ENCODE measurements at regions of chr4 and their contacts with region 1.

Region 1: DNA sequence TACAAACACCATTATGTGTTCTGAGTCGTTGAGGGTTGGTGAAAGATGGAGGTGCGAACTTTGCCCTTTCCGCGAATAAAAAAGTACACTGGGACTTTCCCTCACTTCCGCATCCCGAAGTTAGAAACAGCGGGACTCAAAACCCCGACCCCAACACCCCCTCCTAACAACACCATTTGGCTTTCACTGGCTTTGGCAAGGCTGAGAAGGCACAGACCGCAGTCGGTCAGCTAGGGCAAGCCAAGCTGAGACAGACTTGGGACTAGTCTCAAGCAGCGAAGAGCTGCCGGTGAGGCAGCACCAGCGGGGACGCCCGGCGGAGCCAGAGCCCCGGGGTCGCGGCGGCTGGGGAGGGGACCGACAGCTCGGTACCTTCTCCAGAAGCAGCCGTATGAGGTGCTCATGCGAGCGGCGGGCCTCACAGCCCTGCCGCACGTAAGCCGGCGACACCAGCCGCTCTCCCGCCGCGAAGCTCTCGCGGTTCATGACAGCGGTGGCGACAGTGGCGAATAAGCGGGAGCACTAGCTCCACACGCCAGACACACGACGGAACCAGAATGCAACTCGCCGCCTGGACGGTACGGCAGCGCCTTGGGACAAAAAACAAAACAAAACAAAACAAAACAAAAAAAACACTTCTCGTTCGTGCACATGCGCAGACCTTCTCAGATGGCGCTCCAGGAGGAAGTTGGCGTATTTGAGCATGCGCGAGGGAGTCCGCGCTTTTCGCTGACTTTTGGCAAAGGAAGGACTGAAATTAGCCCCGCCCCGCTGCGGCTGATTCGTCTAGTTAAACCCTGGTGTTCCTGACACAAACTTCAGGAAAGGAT is at the start of gene SEPSECS:
- DNase-seq: peak; percentile 90 to 98
- H3K4me3 ChIP-seq: peak within 1 kb of the TSS; percentile 76 to 86
- H3K27ac ChIP-seq: peak within 1 kb of the TSS; percentile 95 to 97
- H3K4me1 ChIP-seq: peaks cover 3 to 15% of the 10 kb centered on the region in 2 donors
- H3K27me3 ChIP-seq: no peaks in the 10 kb centered on the region
- CTCF ChIP-seq: no peak
- total RNA-seq, gene SEPSECS: 5.2 TPM

Region 2: GRCh38 chr4:24190936-24191695 is 969.0 kb before region 1 on chr4:
- intact Hi-C with region 1: no loop called
- DNase-seq: no peak
- H3K4me3 ChIP-seq: no peak overlapping the region
- H3K27ac ChIP-seq: no peak overlapping the region
- H3K4me1 ChIP-seq: no peaks in the 10 kb centered on the region
- H3K27me3 ChIP-seq: no peaks in the 10 kb centered on the region
- CTCF ChIP-seq: no peak

Region 3: DNA sequence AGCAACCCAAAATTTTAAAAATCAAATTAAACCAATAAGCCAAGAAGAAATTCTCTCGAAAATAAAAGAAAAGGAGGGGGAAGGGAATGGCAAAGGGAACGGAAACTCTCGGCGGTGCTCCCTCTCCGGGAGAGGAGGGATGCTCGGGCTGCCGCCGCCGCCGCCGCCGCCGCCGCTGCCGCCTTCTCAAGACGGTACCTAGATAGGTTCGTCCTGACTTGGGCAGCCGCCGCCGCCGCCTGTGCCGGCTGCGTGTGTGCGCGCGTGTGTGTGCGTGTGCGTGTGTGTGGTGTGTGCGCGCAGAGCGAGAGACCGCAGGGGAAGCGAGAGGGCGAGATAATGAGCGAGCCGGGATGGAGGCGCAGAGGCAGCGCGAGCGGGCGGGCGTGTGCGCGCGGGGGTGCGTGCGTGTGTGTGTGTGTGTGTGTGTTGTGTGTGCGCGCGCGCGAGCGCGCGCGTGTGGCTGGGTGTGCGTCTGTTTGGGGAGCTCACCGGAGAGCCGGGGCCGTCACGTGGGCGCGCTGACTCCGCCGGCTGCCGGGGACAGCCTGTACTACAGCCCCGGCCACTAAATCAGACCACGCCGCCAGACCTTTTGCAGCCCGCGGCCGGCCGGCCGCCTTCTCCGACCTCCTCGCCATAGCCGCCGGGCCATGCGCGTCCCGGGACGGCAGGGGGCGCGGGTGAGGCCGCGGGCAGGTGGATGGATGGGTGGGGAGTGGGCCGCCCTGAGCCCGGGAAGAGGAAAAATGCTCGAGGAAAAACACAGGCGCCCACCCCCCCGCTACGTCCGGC is 687.4 kb before region 1 on chr4:
- intact Hi-C with region 1: loop called (anchors 5 kb)
- DNase-seq: peak; percentile 31 to 88
- H3K4me3 ChIP-seq: peak overlapping the region; percentile 60 to 81
- H3K27ac ChIP-seq: peak overlapping the region; percentile 31 to 57
- H3K4me1 ChIP-seq: peaks cover 8 to 15% of the 10 kb centered on the region in 2 donors
- H3K27me3 ChIP-seq: no peaks in the 10 kb centered on the region
- CTCF ChIP-seq: peak; percentile 54 to 73 (median 66)

Region 4: DNA sequence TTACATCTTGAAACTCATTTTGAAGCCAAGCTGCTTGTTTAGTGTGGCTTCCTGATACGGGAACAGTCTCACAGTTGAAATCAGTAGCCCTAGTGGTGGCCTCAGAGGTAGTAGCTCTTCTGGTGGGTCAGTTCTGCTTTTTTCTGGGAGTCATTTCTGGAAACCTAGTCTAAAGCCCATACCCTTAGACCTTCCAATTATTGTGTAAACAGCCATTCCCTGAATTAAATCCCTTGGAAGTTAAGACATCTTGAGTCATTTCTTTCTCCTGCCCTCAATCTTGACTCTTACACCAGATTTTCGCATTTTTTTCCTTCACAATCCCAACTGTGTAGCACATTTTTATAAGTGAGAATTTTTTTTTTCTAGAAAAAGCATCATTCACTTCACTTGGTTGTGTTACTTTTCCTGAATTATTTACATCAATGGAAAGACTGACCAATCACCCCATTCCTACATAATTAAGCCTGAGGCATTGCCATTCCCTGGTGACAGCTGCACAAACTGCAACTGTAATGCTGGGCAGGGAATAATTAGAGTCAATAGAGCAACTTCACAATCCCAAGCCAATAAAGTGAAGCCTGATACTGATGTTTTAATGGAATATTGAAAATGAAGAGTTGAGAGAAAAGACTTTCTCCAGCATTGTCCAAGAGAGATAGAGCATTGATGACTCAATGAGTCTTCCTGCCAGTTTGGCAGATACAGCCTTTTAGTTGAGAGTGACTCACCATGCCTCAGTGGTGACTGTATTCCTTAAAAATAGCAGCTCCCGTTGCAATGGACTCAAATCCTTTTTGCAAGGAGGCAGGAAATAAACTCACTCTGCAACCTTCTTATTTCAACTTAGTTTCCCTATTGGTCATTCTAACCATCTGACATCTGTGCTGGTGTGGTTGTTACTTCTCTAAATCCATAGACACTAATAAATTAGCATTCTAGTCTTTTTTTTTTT is 13.1 kb after region 1 on chr4:
- intact Hi-C with region 1: loop called (anchors 1 kb)
- DNase-seq: peak; percentile 28 to 89
- H3K4me3 ChIP-seq: no peak overlapping the region
- H3K27ac ChIP-seq: peak overlapping the region; percentile 76 to 78
- H3K4me1 ChIP-seq: peaks cover 2 to 14% of the 10 kb centered on the region in 2 donors
- H3K27me3 ChIP-seq: no peaks in the 10 kb centered on the region
- CTCF ChIP-seq: no peak

Region 5: GRCh38 chr4:25312496-25313200 is 152.5 kb after region 1 on chr4 and contains the start of gene ZCCHC4:
- intact Hi-C with region 1: loop called (anchors 2 kb)
- DNase-seq: peak; percentile 43 to 94
- H3K4me3 ChIP-seq: peak within 1 kb of the TSS; percentile 67 to 85
- H3K27ac ChIP-seq: peak within 1 kb of the TSS in 1 of 2 donors; percentile 78
- H3K4me1 ChIP-seq: peaks cover 0 to 6% of the 10 kb centered on the region in 2 donors
- H3K27me3 ChIP-seq: no peaks in the 10 kb centered on the region
- CTCF ChIP-seq: peak; percentile 78 to 99 (median 92)
- total RNA-seq, gene ZCCHC4: 1.7 TPM

Region 6: GRCh38 chr4:25376754-25377571 is 216.9 kb after region 1 on chr4 and contains the start of gene ANAPC4:
- intact Hi-C with region 1: loop called (anchors 5 kb)
- DNase-seq: peak; percentile 83 to 95
- H3K4me3 ChIP-seq: peak within 1 kb of the TSS; percentile 79 to 94
- H3K27ac ChIP-seq: peak within 1 kb of the TSS; percentile 71 to 85
- H3K4me1 ChIP-seq: peaks cover 0 to 3% of the 10 kb centered on the region in 2 donors
- H3K27me3 ChIP-seq: no peaks in the 10 kb centered on the region
- CTCF ChIP-seq: peak in 1 of 3 experiments; percentile 3
- total RNA-seq, gene ANAPC4: 23.4 TPM